Tibial artery (tissue), 4 donors: ENCODE measurements at regions of chr7 and their contacts with region 1.

Region 1: DNA sequence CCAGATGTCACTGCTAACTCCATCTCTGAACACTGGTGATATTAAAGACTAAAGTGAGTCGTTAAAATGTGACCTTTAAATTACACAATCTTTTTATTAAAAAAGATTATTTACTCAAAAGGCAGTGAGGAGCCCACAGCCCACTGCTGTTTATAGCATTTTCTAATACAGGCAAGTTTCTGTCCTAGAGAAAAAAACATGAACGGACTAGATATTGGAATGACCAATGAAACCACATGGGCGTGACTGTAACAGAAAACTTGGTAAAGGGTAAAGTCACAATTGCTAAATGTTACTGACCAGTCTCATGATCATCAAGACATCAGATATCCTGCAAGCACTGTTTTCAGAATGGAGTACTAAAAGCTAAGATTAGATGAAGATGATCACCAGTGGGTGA is 78.7 kb downstream of the FEZF1 start:
- DNase-seq: no peak
- H3K4me3 ChIP-seq: no peak overlapping the region
- H3K27ac ChIP-seq: no peak overlapping the region
- H3K4me1 ChIP-seq: no peaks in the 10 kb centered on the region
- H3K27me3 ChIP-seq: no peaks in the 10 kb centered on the region
- CTCF ChIP-seq: no peak

Region 2: DNA sequence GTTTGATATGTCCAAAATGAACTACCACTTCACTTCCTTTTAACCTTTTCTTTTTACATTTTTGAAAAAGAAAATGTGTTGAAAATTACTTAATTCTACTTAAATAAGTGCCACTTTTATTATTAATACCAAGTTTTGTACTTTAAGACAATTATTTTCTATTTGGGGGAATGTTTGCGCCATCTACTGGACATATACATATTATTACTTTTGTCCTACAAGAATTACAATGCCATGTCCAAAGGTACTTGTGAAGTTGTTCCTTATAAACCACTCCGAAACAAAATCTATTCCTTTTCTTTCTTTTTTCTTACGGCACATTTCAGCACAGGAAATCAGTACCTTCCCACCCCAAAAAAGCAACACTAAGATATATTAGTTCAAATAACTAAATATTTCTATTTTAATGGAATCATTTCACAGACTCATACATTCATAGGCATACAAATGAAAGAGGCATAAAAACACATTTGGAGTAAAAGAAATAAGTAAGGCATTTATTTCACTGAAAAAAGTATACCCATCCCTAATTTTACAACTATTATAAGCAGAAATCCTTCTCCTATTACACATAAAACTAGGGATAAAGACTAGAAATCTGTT is 303.1 kb after region 1 on chr7:
- intact Hi-C with region 1: loop called (anchors 10 kb)
- DNase-seq: no peak
- H3K4me3 ChIP-seq: no peak overlapping the region
- H3K27ac ChIP-seq: no peak overlapping the region
- H3K4me1 ChIP-seq: no peaks in the 10 kb centered on the region
- H3K27me3 ChIP-seq: no peaks in the 10 kb centered on the region
- CTCF ChIP-seq: peak; percentile 45